Dendritic cell treated with granulocyte-macrophage colony-stimulating factor and Interleukin-4, amounts not matched to agents 40 ng/mL and 50 ng/mL, for 4 days (primary cell): ENCODE measurements at regions of chrX and their contacts with region 1.

Region 1: DNA sequence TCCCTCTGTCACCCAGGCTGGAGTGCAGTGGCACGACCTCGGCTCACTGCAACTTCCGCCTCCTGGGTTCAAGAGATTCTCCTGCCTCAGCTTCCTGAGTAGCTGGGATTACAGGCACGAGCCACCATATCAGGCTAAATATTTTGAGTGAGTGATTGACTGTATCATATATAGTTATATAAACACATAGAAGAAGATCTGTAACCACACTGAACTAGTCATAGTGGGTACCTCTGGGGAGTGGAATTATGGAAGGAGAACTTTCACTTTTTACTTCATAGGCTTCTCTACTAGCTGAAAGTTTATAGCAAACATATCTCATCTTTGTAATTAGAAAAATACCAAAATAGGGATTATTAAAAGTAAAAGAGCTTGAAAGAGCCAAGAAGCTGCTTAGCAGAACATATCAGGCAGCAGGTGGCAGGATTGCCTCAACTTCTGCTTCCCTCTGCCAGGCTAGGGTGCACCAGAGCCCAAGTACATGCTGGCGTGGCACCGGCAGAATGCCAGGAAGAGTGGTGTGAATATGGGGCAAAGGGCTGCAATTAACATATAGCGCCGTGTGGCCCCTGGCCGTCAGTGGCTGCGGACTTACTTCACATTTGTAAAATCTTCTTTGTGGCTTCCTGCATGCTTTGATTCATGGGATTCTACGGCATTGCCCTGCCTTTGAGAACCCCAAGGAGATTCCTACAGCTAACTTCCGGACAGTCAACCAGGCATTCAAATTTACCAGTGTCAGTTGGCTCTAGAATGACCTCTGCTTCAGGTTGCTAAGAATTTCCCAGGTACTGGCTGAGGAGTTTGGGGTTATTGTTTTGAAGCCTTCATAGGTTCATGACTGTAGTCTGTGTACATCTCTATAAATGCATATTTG is 39.4 kb upstream of the CD40LG start:
- H3K4me3 Mint-ChIP-seq: no peak overlapping the region
- H3K27ac Mint-ChIP-seq: no peak overlapping the region
- H3K4me1 Mint-ChIP-seq: no peaks in the 10 kb centered on the region
- H3K27me3 Mint-ChIP-seq: no peaks in the 10 kb centered on the region

Region 2: DNA sequence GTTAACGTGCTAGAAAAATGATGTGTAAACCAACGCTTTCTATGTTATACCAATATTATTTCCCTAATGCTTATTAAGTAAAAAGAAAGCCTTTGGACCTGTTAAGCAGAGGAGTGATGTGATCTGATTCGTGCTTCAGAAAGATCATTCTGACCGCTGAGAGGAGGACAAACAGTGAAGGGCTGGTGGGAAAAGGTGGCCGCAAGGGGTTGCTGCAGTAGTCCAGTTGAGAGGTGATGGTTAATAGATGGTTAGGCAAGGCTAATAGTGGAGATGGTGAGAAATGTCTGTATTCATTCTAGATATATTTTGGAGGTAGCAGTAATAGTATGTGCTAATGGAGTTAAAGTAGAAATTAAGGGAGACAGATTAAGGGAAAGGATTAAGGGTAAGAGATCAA is 89.5 kb before region 1 on chrX:
- intact Hi-C with region 1: no loop called
- H3K4me3 Mint-ChIP-seq: no peak overlapping the region
- H3K27ac Mint-ChIP-seq: no peak overlapping the region
- H3K4me1 Mint-ChIP-seq: no peaks in the 10 kb centered on the region
- H3K27me3 Mint-ChIP-seq: no peaks in the 10 kb centered on the region

Region 3: DNA sequence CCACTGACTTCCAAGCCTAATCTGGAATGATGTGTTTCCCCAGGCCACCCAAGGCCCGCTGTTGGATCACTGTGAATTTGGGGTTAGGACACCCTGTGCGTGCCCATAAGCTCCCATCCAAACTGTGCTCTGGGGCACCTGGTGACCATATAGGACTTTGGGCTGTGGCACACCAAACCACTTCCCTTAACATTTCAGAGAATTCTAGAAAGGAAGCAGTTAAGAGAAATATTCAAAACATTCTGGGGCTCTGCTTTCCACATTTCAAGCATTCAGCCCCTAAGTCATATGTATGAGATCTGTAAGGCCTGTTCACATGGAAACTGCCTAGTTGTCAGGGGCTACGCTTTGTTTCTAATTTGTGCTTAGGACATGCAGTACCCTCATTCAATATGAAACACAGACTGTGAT is 62.2 kb before region 1 on chrX:
- intact Hi-C with region 1: no loop called
- H3K4me3 Mint-ChIP-seq: no peak overlapping the region
- H3K27ac Mint-ChIP-seq: no peak overlapping the region
- H3K4me1 Mint-ChIP-seq: no peaks in the 10 kb centered on the region
- H3K27me3 Mint-ChIP-seq: no peaks in the 10 kb centered on the region

Region 4: GRCh38 chrX:136694431-136695087 is 86.0 kb after region 1 on chrX:
- intact Hi-C with region 1: loop called (anchors 1 kb)
- H3K4me3 Mint-ChIP-seq: no peak overlapping the region
- H3K27ac Mint-ChIP-seq: no peak overlapping the region
- H3K4me1 Mint-ChIP-seq: no peaks in the 10 kb centered on the region
- H3K27me3 Mint-ChIP-seq: no peaks in the 10 kb centered on the region

Region 5: DNA sequence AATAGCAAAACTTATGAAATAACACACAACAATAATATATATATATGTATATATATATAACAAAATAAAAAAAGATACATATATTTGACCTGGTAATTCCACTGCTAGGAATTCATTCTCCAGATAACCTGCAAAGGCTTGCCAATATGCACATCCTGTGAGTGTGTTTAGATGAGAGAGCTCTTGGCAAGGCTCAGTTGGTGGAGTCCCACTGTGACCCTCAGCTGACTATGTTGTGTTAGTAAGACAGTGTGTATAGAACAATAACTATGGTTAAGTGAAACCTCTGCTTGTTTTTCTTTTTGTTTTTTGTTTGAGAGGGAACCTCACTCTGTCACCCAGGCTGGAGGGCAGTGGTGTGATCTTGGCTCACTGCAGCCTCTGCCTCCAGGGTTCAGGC is 311.5 kb after region 1 on chrX:
- intact Hi-C with region 1: loop called (anchors 5 kb)
- H3K4me3 Mint-ChIP-seq: no peak overlapping the region
- H3K27ac Mint-ChIP-seq: no peak overlapping the region
- H3K4me1 Mint-ChIP-seq: no peaks in the 10 kb centered on the region
- H3K27me3 Mint-ChIP-seq: no peaks in the 10 kb centered on the region

Region 6: DNA sequence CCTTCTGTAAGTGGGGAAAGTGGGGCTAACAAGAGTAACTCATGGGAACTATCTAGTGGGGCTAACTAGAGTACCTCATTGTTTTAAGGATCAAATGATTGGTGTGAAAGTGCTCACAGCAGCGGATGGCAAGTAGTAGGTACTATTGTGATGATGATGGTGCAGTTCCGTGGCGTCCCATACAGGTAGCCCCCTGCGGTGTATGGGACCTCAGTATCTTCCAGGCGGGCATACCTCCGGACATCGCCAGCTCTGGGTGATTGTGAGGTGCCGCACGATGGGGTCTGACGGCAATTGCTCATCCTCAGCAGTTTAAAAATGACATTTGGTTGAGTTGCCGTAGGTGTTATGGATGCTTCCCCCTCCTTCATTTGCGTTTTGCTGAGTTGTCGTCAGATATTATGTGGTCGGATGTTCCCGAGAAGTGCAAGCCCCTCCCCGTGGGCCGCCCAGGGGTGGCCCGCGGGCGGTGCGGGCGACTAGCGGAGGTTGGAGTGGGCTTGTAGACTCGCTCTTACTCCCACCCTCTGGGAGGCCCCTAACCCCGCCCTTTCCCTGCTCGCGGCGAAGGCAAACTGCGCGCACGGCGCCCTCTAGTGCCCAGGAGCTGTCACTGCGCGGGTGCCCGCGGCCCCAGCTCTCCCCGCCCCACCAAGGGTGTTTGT is 443.6 kb after region 1 on chrX:
- intact Hi-C with region 1: loop called (anchors 5 kb)
- H3K4me3 Mint-ChIP-seq: peak overlapping the region; percentile 72
- H3K27ac Mint-ChIP-seq: no peak overlapping the region
- H3K4me1 Mint-ChIP-seq: peaks cover 13% of the 10 kb centered on the region
- H3K27me3 Mint-ChIP-seq: peaks cover 51% of the 10 kb centered on the region